GM18951 (cell line): ENCODE measurements at regions of chr9 and their contacts with region 1.

Region 1: GRCh38 chr9:6802926-6803325 is 45.2 kb downstream of the KDM4C start:
- POLR2A ChIP-seq: no peak

Region 2: DNA sequence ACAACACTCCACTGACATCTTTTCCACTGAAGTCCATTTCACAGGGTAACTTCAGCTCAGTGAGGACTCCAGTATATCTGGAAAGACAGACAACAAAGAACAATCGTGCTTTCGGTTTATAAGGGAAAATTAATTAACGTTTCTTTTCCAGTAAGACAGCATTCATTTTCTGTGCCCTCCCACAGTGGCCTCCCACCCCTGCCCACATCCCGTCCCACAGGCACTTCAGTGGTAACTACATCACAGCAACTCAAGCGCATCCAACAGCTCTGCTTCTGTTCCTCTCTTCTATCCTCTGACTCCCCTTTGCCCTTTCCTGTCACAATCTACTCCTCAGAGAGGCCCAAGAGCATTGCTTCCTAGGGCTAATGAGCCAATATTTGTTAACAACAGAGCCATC is 197.7 kb before region 1 on chr9:
- in situ Hi-C with region 1: no loop called
- POLR2A ChIP-seq: no peak

Region 3: DNA sequence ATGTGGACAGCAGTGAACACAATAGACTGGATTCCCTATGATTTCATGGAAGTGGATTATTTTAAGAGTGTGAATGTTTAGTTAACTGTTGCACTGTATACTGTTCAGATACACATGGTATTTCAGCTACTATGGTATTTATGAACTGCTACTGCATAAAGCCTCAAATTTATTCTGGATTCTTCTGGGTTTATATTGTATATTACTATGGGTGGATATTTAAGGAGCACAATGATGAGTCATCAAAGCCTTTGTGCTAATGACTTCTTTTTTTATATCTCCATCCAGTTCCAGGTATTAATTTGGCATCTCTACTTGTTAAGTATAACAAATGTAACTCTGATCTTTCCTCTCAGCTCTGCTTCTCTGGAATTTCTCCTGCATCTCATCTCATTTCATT is 38.4 kb before region 1 on chr9:
- in situ Hi-C with region 1: loop called (anchors 5 kb)
- POLR2A ChIP-seq: no peak